Activated CD4-positive, alpha-beta T cell treated with anti-CD3 and anti-CD28 coated beads, Interleukin-2, amount 10 ng/mL, durations not matched to agents 24 days and 14 days (primary cell): ENCODE measurements at regions of chr3 and their contacts with region 1.

Region 1: GRCh38 chr3:197394464-197395321 is 96.3 kb upstream of the DLG1 start:
- DNase-seq: peak; percentile 83
- H3K4me3 Mint-ChIP-seq: no peak overlapping the region
- H3K27ac Mint-ChIP-seq: peak overlapping the region; percentile 76
- H3K4me1 Mint-ChIP-seq: peaks cover 27% of the 10 kb centered on the region
- H3K27me3 Mint-ChIP-seq: no peaks in the 10 kb centered on the region

Region 2: GRCh38 chr3:196837819-196838420 is 556.8 kb before region 1 on chr3:
- intact Hi-C with region 1: no loop called
- DNase-seq: peak; percentile 91
- H3K4me3 Mint-ChIP-seq: no peak overlapping the region
- H3K27ac Mint-ChIP-seq: no peak overlapping the region
- H3K4me1 Mint-ChIP-seq: peaks cover 3% of the 10 kb centered on the region
- H3K27me3 Mint-ChIP-seq: no peaks in the 10 kb centered on the region

Region 3: GRCh38 chr3:197428117-197428801 is 33.6 kb after region 1 on chr3:
- intact Hi-C with region 1: loop called (anchors 5 kb)
- DNase-seq: peak; percentile 91
- H3K4me3 Mint-ChIP-seq: peak overlapping the region; percentile 71
- H3K27ac Mint-ChIP-seq: peak overlapping the region; percentile 92
- H3K4me1 Mint-ChIP-seq: peaks cover 55% of the 10 kb centered on the region
- H3K27me3 Mint-ChIP-seq: peaks cover 13% of the 10 kb centered on the region

Region 4: DNA sequence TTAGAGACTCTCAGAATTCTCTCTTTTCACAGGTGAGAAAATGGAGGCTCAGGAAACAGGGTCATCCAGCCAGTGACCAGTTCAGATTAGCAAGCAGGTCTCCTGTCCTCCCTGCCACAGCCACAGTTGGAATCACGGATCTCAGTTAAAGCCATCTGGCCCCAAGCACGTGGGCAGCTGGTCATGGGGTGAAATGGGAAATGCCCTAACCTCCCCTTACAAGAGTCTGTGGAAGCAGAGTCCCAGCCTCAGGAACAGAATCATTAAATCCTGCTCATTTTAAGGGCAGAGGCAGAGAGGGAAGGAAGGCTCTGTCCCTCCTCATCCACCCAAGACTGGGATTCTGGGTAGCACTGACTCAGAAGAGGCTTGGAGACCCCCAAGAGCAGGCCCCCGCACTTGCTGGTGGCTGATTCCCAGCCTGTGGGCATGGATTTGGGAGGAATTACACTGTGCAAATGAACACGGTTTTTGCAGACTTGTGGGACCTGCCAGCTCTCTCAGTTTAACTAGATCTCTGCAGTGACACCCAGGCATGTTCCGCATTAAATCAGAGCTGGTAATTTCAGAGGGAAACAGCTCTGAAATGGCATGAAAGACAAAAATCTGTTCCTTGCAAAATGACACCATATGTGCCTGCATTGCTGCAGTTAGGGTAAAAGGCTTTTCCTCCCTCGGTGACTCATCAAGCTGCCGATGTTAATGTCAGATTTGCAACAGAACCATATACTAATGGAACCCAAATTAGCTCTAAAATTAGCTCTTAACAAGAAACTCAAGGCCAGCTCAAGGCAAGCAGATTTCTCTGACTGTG is 72.1 kb after region 1 on chr3:
- intact Hi-C with region 1: loop called (anchors 10 kb)
- DNase-seq: no peak
- H3K4me3 Mint-ChIP-seq: no peak overlapping the region
- H3K27ac Mint-ChIP-seq: peak overlapping the region; percentile 25
- H3K4me1 Mint-ChIP-seq: peaks cover 19% of the 10 kb centered on the region
- H3K27me3 Mint-ChIP-seq: peaks cover 19% of the 10 kb centered on the region